Activated T-helper 2 cell treated with anti-CD3 and anti-CD28 coated beads, Interferon-gamma antibody, Interleukin-2, Interleukin-4, amounts not matched to agents 10 μg/mL and 5 μg/mL and 100 μg/mL, durations not matched to agents 14 hours and 24 hours and 36 hours (primary cell): ENCODE measurements at regions of chr2 and their contacts with region 1.

Region 1: GRCh38 chr2:86787736-86788135 is 3.0 kb downstream of the CD8A start:
- DNase-seq: no peak
- H3K4me3 Mint-ChIP-seq: no peak overlapping the region
- H3K27ac Mint-ChIP-seq: no peak overlapping the region
- H3K4me1 Mint-ChIP-seq: peaks cover 23% of the 10 kb centered on the region
- H3K27me3 Mint-ChIP-seq: peaks cover 46% of the 10 kb centered on the region

Region 2: GRCh38 chr2:86337244-86337836 is 450.4 kb before region 1 on chr2 and contains the start of gene REEP1:
- intact Hi-C with region 1: loop called (anchors 5 kb)
- DNase-seq: no peak
- H3K4me3 Mint-ChIP-seq: peak within 1 kb of the TSS; percentile 79
- H3K27ac Mint-ChIP-seq: no peak within 1 kb of the TSS
- H3K4me1 Mint-ChIP-seq: peaks cover 15% of the 10 kb centered on the region
- H3K27me3 Mint-ChIP-seq: peaks cover 68% of the 10 kb centered on the region
- total RNA-seq, gene REEP1: 0.62 and 0.71 TPM in 2 replicates